Activated T-helper 1 cell treated with anti-CD3 and anti-CD28 coated beads, Interleukin-12 subunit alpha, Interleukin-12 subunit beta, Interleukin-2, Interleukin-4 antibody, amounts not matched to agents 30 ng/mL and 10 ng/mL and 1 ng/mL, durations not matched to agents 14 hours and 24 hours and 36 hours (primary cell): ENCODE measurements at regions of chr10 and their contacts with region 1.

Region 1: GRCh38 chr10:88270871-88271713 is 312.0 kb downstream of the RNLS start:
- DNase-seq: peak; percentile 63
- H3K4me3 Mint-ChIP-seq: peak overlapping the region; percentile 36
- H3K27ac Mint-ChIP-seq: peak overlapping the region; percentile 86
- H3K4me1 Mint-ChIP-seq: peaks cover 59% of the 10 kb centered on the region
- H3K27me3 Mint-ChIP-seq: peaks cover 3% of the 10 kb centered on the region

Region 2: GRCh38 chr10:87094373-87095235 is 1176.5 kb before region 1 on chr10 and contains the starts of genes GLUD1 and SHLD2:
- intact Hi-C with region 1: loop called (anchors 10 kb)
- DNase-seq: peak; percentile 91
- H3K4me3 Mint-ChIP-seq: peak within 1 kb of the TSS; percentile 98
- H3K27ac Mint-ChIP-seq: peak within 1 kb of the TSS; percentile 95
- H3K4me1 Mint-ChIP-seq: peaks cover 45% of the 10 kb centered on the region
- H3K27me3 Mint-ChIP-seq: no peaks in the 10 kb centered on the region
- total RNA-seq, gene GLUD1: 116 and 125 TPM in 2 replicates
- total RNA-seq, gene SHLD2: 41.3 and 42.1 TPM in 2 replicates

Region 3: DNA sequence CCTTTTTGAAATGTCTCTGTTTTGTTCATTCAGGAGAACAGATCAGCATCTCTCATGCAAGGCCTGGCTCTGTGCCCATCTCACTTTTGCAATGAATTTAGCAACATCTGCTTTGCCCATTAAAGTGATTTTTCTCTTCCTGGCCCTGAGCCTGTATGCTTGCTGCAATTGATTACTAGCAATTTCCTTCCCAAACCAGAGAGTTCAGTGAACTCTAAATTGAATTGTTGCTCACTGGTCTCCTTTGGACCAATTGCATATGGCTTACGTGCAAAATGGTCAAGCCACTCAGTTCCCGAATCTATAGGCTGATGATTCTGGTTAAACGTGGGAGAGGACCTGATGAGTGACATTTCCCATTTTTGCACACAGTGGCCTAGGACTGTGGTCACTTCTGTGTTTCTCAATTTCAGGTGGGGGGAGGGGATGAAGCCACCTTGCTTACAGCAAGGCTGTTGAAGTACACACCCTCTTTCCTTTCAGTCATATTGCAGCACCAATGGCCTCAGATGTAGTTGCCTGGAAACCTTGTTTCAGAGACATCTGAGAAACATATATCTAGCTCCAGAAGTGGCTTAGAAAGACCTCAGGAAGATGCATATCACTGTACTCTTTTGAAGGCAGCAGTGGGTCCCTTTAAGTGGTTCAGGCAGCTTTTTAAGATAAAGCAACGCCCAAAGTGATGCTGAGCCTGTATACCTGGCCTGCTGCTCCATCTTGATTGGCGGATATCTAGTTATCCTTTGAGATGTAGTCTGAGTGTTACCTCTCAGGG is 206.3 kb before region 1 on chr10:
- intact Hi-C with region 1: loop called (anchors 1 kb)
- DNase-seq: peak; percentile 11
- H3K4me3 Mint-ChIP-seq: no peak overlapping the region
- H3K27ac Mint-ChIP-seq: peak overlapping the region; percentile 66
- H3K4me1 Mint-ChIP-seq: peaks cover 60% of the 10 kb centered on the region
- H3K27me3 Mint-ChIP-seq: no peaks in the 10 kb centered on the region

Region 4: DNA sequence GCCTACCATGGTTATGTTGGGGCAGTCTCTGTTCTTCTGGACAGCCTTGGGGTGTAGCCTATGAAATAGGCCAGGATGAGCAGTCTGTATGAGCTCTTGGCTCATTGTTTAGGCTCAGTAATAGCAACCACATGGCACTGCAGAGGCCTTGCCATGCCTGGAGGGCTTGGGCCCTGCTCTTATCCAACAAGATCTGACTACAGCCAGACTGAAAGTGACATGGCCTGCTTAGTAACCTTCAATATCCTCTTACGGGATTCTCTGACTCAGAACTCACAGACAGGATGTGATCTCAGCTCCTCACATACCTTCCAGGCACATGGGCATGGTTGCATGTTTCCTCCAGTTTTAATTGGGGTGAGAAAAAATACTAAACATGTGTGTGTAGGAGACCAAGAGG is 118.4 kb before region 1 on chr10:
- intact Hi-C with region 1: loop called (anchors 1 kb)
- DNase-seq: peak; percentile 57
- H3K4me3 Mint-ChIP-seq: peak overlapping the region; percentile 54
- H3K27ac Mint-ChIP-seq: peak overlapping the region; percentile 97
- H3K4me1 Mint-ChIP-seq: peaks cover 37% of the 10 kb centered on the region
- H3K27me3 Mint-ChIP-seq: peaks cover 5% of the 10 kb centered on the region

Region 5: GRCh38 chr10:88227342-88228018 is 43.6 kb before region 1 on chr10:
- intact Hi-C with region 1: no loop called
- DNase-seq: no peak
- H3K4me3 Mint-ChIP-seq: no peak overlapping the region
- H3K27ac Mint-ChIP-seq: no peak overlapping the region
- H3K4me1 Mint-ChIP-seq: no peaks in the 10 kb centered on the region
- H3K27me3 Mint-ChIP-seq: peaks cover 9% of the 10 kb centered on the region

Region 6: GRCh38 chr10:88288320-88289059 is 17.4 kb after region 1 on chr10:
- intact Hi-C with region 1: loop called (anchors 1 kb)
- DNase-seq: no peak
- H3K4me3 Mint-ChIP-seq: no peak overlapping the region
- H3K27ac Mint-ChIP-seq: no peak overlapping the region
- H3K4me1 Mint-ChIP-seq: peaks cover 33% of the 10 kb centered on the region
- H3K27me3 Mint-ChIP-seq: peaks cover 2% of the 10 kb centered on the region

Region 7: GRCh38 chr10:88473989-88474883 is 203.1 kb after region 1 on chr10:
- intact Hi-C with region 1: no loop called
- DNase-seq: no peak
- H3K4me3 Mint-ChIP-seq: no peak overlapping the region
- H3K27ac Mint-ChIP-seq: no peak overlapping the region
- H3K4me1 Mint-ChIP-seq: no peaks in the 10 kb centered on the region
- H3K27me3 Mint-ChIP-seq: no peaks in the 10 kb centered on the region

Region 8: GRCh38 chr10:88538038-88538437 is 266.9 kb after region 1 on chr10:
- intact Hi-C with region 1: no loop called
- DNase-seq: no peak
- H3K4me3 Mint-ChIP-seq: no peak overlapping the region
- H3K27ac Mint-ChIP-seq: no peak overlapping the region
- H3K4me1 Mint-ChIP-seq: no peaks in the 10 kb centered on the region
- H3K27me3 Mint-ChIP-seq: peaks cover 11% of the 10 kb centered on the region

Region 9: GRCh38 chr10:88791924-88792323 is 520.8 kb after region 1 on chr10:
- intact Hi-C with region 1: loop called (anchors 10 kb)
- DNase-seq: no peak
- H3K4me3 Mint-ChIP-seq: no peak overlapping the region
- H3K27ac Mint-ChIP-seq: no peak overlapping the region
- H3K4me1 Mint-ChIP-seq: peaks cover 25% of the 10 kb centered on the region
- H3K27me3 Mint-ChIP-seq: peaks cover 16% of the 10 kb centered on the region

Region 10: GRCh38 chr10:89163265-89163995 is 892.3 kb after region 1 on chr10:
- intact Hi-C with region 1: loop called (anchors 5 kb)
- DNase-seq: peak; percentile 56
- H3K4me3 Mint-ChIP-seq: peak overlapping the region; percentile 57
- H3K27ac Mint-ChIP-seq: peak overlapping the region; percentile 76
- H3K4me1 Mint-ChIP-seq: peaks cover 35% of the 10 kb centered on the region
- H3K27me3 Mint-ChIP-seq: peaks cover 41% of the 10 kb centered on the region